ENCODE measurements at regions of chr2 and their contacts with region 1.

Region 1: DNA sequence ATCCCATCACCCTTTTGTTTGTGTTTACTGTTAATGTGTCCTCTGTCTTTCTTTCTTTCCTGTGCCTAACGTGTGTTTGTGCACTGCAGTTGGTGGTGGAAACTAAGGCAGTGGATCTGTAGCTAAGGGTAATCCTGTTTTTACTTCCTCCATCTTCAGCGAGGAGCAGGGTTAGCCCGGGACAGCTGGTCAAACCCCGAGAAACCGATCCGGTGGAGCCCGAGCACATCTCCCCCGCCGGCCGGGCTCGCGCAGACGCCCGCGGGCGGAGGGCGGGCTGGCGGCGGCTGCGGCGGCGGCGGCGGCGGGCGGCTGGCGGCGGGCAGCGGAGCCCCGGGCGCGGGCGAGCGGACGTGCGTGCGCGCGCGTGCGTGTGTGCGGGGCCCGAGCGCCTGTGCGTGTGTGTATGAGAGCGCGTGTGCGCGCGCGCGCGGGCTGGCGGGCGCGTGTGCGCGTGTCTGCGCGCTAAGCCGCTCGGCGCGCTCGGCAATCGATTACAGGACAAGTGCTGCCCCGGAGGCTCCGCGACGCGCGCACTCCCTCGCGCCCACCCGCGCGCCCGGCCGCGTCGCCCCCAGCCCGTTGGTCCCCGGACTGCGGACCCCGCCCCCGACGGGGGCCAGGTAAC is at the start of gene IKZF2:
- ATAC-seq: peak; percentile 80 to 92 (median 87)
- H3K4me3 ChIP-seq: peak within 1 kb of the TSS; percentile 85 to 99 (median 97)
- H3K27ac ChIP-seq: peak within 1 kb of the TSS; percentile 24 to 74
- H3K4me1 ChIP-seq: peaks cover 3 to 6% of the 10 kb centered on the region in 2 donors
- total RNA-seq, gene IKZF2: 1.0 to 20.2 (median 6.4) TPM

Region 2: DNA sequence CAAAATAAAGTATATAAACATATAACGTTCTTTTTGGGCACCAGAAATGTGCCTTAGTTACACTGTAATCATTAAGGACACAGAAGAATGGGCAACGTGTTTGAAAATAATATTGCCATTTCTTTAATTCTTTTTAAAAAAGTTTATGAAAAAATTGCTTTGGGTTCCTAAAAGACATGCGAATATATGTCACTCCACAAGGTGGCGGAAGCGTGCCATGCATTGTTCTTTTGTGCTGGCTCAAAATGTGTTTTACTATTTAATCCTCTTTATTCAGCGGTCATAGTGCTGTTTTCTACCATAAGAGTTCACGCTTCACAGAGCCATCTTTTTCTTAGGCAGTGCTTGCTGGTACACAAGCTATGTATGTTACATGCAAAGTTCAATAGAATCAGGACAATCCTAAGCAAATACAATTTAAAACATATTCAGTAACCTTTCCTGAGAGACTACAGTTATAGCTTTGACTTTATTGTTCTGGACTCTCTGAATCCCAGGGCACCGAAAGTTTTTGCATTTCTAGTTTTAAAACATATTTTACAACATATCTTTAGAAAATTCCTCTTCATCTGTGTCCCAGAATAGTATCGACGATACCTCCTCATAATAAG is 465.2 kb before region 1 on chr2:
- in situ Hi-C with region 1: loop called in 4 of 9 experiments (anchors 10 to 25 kb)
- ATAC-seq: peak in 2 of 8 experiments; percentile 41 to 44
- H3K4me3 ChIP-seq: no peak overlapping the region
- H3K27ac ChIP-seq: no peak overlapping the region
- H3K4me1 ChIP-seq: no peaks in the 10 kb centered on the region